AG04449 (cell line): ENCODE measurements at regions of chr10 and their contacts with region 1.

Region 1: DNA sequence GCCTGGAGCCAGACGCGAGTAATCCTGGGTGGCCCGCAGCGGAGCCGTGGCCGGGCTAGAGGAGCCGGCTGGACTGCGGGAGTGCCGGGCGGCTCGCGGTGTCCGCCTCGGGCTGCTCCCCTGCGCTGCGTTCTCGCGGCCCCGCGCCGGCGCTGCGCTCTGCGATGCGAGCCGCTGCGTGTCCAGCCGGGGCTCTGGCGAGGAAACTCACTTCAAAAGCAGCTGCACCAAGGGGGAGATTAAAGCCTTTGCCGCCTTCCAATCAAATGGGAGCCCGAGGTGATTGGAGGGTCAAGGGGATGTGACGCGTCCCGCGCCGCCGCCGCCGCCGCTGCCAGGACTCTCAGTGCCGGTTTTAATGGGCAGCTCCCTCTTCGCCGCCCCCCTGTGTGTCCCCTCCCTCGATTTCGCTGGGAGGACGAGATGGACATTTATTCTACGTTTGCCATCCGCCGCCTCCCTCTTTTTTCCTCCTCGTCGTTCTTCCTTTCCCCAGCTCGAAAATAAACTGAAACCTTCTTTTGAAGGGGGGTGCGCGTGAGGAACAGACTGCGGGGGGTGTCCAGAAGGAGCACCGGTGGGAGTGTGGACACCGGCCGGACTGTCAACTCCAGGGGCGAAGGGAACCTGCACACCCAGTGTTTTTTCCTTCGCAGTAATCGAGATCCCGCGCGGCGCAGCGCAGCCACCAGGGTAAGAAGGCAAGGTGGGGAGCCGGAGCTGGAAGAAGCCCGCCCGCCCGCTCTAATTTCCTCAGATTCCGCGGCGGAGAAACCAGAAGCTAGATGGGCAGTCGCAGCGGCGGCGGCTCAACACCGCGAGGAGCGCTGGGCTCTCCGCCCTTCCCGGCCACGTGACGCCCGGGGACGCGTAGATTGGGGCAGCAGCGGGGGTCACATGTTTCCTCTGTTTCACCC is at the start of gene ZNF503:
- DNase-seq: peak; percentile 76
- H3K4me3 ChIP-seq: peak within 1 kb of the TSS; percentile 96
- CTCF ChIP-seq: peak; percentile 18

Region 2: DNA sequence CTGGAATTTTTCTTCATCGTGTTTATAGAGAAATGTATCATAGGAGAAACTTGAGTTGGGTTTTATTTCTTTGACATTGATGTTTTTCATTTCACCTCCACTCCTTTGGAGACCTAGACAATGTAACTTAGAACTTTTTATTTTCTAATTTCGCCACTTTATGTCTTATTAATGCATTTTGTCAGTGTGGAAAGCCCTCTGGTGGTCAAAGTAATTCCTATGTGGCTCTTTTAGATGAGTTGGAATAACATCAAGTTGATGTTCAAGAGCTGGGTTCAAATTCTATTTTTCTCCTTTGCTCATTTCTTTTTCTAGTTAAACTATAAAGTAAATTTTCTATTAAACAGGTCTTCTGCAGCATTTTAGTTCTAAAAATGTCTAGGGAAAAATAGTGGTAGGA is 508.2 kb after region 1 on chr10:
- CTCF ChIA-PET with region 1: interaction called, 19 read pairs
- POLR2A ChIA-PET with region 1: interaction called, 4 read pairs
- DNase-seq: no peak
- H3K4me3 ChIP-seq: no peak overlapping the region
- CTCF ChIP-seq: no peak